ENCODE measurements at regions of chr20 and their contacts with region 1.

Region 1: GRCh38 chr20:44609511-44610312 is 27.3 kb downstream of the PKIG start:
- DNase-seq: peak; percentile 88 to 95 (median 95)
- ATAC-seq: peak; percentile 91 to 94
- H3K4me3 ChIP-seq: no peak overlapping the region
- H3K27ac ChIP-seq: peak overlapping the region; percentile 86
- H3K4me1 ChIP-seq: peaks cover 11% of the 10 kb centered on the region
- H3K27me3 ChIP-seq: no peaks in the 10 kb centered on the region

Region 2: DNA sequence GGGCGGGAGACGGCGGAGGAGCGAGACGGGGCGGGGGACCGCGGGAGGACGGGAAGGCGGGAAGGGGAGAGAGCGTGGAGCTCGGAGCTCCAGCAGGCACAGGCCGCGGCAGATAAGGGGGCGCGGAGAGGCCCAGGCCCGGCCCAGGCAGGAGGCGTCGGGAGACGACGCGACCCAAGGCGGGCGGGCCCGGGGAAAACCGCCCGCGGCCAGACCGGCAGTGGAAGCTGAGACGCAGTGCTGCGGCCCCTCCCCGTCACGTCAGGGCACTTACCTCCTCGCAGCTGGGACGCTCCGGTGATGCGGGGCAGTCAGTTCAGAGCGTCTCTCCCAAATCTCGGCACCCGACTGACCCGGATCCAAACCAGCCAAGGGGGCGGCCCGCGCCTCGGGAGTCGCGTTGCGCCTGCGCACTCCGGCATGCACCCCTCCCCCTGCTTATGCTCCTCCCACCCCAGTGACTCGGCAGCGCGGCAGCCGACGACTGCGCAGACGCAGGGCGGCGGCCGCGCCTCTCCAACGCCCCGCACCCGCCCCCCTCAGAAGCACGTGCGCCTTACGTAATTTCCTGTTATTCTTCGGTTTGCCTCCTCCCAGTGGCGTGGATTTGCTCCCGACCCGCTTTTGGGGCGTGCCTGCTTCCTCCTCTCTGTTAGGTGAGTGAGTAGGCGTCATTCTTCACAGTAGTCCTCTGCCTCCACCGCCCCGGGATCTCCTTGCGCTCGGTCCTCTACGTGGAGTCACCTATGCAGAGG is 399.1 kb before region 1 on chr20 and contains the start of gene OSER1:
- intact Hi-C with region 1: loop called in 1 of 4 experiments (anchors 10 kb)
- DNase-seq: peak; percentile 95 to 99 (median 98)
- ATAC-seq: peak; percentile 94 to 95
- H3K4me3 ChIP-seq: peak within 1 kb of the TSS; percentile 94
- H3K27ac ChIP-seq: peak within 1 kb of the TSS; percentile 94
- H3K4me1 ChIP-seq: peaks cover 2% of the 10 kb centered on the region
- H3K27me3 ChIP-seq: no peaks in the 10 kb centered on the region
- total RNA-seq, gene OSER1: 22.6 to 44.5 (median 36.1) TPM

Region 3: DNA sequence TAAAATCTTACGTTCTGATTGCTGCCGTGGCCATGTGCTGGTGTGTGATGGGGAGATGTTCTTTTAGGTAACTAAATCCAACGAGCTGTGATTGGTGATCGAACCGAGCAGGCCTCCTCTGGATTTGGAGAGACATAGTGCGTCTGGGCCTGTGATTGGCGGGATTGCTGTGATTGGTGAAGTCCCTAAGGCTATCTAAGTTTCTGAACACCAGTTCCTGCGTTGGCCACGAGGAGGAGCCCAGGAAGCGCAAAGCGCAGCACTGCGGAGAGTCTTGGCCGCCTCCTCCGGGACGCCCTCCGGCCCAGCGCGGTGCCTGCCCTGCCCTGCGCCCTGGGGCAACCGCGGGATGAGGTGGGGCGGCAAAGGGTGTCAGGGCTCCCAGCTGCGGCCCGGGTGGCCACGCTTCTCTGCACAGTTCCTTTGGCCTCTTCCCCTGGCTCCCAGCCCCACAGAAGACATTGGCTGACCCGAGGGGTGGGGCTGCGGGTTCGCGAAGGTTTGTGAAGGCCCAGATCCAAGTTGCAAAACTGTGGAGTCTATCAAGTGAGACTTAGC is 221.2 kb before region 1 on chr20:
- intact Hi-C with region 1: loop called (anchors 5 to 10 kb)
- DNase-seq: peak; percentile 73 to 86 (median 83)
- ATAC-seq: peak; percentile 76 to 88
- H3K4me3 ChIP-seq: no peak overlapping the region
- H3K27ac ChIP-seq: no peak overlapping the region
- H3K4me1 ChIP-seq: no peaks in the 10 kb centered on the region
- H3K27me3 ChIP-seq: no peaks in the 10 kb centered on the region

Region 4: DNA sequence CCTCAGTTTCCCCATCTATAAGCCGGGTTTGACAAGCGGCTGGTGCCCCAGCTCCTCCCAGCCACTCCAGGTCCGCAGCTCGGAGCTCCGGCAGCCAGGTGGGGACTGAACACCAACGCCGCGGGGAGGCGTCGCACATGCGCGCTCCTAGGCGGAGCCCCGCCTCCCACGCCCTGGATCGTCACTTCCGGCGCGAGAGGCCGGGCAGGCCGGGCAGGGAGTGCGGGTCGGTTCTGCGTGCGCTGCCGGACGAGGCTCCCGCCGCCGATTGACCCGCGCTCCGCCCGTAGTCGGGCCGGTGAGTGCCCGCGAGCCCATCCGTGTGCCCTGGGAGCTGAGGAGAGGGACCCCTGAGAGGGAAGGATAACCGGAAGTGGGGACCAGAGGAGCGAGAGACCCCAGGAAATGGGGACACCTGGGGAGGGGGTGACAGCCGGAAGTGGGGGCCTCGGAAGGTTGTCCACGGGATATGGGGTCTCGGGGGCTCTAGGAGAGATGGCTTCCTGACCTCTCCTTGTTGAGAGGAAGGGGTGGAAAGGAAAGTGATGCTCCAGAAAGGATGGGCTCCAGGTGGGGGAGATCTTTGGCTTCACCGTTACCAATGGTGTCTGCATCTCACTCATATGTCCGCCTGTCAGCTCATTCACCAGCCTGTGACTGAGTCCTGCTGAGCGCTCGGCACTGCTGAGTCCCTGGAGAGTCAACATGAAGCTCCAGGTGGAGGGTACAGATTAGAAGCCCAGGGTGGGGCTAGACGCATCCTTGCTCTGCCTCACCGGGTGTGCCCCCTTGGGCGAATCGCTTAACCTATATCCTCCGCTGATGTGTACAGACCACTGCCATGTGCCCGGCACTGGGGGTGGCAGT is 133.8 kb before region 1 on chr20 and contains the start of gene TTPAL:
- intact Hi-C with region 1: loop called in 1 of 4 experiments (anchors 5 kb)
- DNase-seq: peak; percentile 89 to 96 (median 95)
- ATAC-seq: peak; percentile 98
- H3K4me3 ChIP-seq: peak within 1 kb of the TSS; percentile 72
- H3K27ac ChIP-seq: peak within 1 kb of the TSS; percentile 90
- H3K4me1 ChIP-seq: no peaks in the 10 kb centered on the region
- H3K27me3 ChIP-seq: no peaks in the 10 kb centered on the region
- total RNA-seq, gene TTPAL: 6.3 to 7.1 (median 6.7) TPM

Region 5: DNA sequence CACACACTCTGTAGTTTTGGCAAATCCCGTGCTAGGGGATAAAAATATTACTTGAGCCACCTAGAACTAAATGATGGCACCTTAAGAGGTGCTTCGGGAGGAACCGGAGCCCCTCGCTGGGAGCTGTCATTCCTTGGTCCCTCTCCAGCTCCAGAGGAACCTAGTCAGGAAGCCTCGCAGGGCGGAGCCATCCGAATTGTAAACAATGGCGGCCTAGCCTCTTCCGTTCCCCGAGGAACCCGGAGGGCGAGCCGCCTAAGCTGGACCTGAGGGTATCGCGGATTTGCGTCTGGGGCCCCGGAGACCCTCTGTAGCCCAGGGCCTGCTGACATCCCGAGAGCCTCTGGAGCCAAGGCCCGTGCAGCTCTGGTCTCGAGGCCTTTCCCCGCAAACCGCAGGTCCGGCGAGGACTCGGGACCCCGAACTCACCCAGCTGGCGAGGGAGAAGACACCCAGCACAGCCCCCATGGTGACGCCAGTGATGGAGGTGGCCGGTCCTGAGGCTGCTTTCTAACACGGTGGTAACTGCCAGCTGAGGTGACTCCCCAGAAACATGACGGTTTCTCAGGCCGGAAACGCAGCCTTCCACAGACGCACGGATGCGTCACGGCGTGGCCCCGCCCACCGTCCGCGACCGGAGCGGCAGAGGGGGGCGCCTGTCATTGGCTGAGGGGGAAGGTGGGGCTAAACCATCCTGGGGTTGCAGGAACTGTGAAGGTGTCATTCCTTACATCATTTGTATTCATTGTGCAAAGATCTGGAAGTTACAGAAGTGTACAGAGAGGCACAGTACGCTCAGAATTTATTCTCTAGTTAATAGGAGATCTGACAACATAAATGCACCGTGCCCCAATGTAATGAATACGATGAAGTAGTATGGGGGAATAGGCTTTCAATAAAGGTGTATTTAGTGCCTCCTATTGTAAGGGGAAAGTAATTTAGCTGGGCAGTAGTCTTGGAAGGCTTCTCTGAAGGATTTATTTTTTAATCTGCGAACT is 87.9 kb before region 1 on chr20 and contains the start of gene SERINC3:
- intact Hi-C with region 1: loop called in 1 of 4 experiments (anchors 5 kb)
- DNase-seq: peak; percentile 96 to 98 (median 98)
- ATAC-seq: peak; percentile 99
- H3K4me3 ChIP-seq: peak within 1 kb of the TSS; percentile 90
- H3K27ac ChIP-seq: peak within 1 kb of the TSS; percentile 99
- H3K4me1 ChIP-seq: peaks cover 3% of the 10 kb centered on the region
- H3K27me3 ChIP-seq: no peaks in the 10 kb centered on the region
- total RNA-seq, gene SERINC3: 101 to 118 (median 105) TPM

Region 6: GRCh38 chr20:44532259-44532980 is 77.3 kb before region 1 on chr20:
- intact Hi-C with region 1: loop called in 2 of 4 experiments (anchors 5 to 10 kb)
- DNase-seq: peak in 1 of 3 donors; percentile 68
- ATAC-seq: peak in 1 of 2 donors; percentile 5
- H3K4me3 ChIP-seq: peak overlapping the region; percentile 91
- H3K27ac ChIP-seq: peak overlapping the region; percentile 49
- H3K4me1 ChIP-seq: peaks cover 5% of the 10 kb centered on the region
- H3K27me3 ChIP-seq: no peaks in the 10 kb centered on the region

Region 7: GRCh38 chr20:44537993-44538392 is 71.7 kb before region 1 on chr20:
- intact Hi-C with region 1: loop called in 3 of 4 experiments (anchors 2 to 10 kb)
- DNase-seq: no peak
- ATAC-seq: no peak
- H3K4me3 ChIP-seq: no peak overlapping the region
- H3K27ac ChIP-seq: no peak overlapping the region
- H3K4me1 ChIP-seq: peaks cover under 1% of the 10 kb centered on the region
- H3K27me3 ChIP-seq: no peaks in the 10 kb centered on the region

Region 8: GRCh38 chr20:45070932-45071632 is 461.4 kb after region 1 on chr20:
- intact Hi-C with region 1: no loop called
- DNase-seq: no peak
- ATAC-seq: no peak
- H3K4me3 ChIP-seq: no peak overlapping the region
- H3K27ac ChIP-seq: no peak overlapping the region
- H3K4me1 ChIP-seq: no peaks in the 10 kb centered on the region
- H3K27me3 ChIP-seq: no peaks in the 10 kb centered on the region